Heart left ventricle (tissue), 16 donors: ENCODE measurements at regions of chr20 and their contacts with region 1.

Region 1: GRCh38 chr20:45293041-45294002 is 13.3 kb upstream of the RBPJL start:
- DNase-seq: peak; percentile 61 to 91 (median 81)
- ATAC-seq: peak; percentile 35 to 90 (median 86)
- H3K4me3 ChIP-seq: peak overlapping the region; percentile 19 to 65 (median 52)
- H3K27ac ChIP-seq: no peak overlapping the region
- H3K4me1 ChIP-seq: peaks cover 0 to 19% (median 8%) of the 10 kb centered on the region in 12 donors
- H3K27me3 ChIP-seq: peaks cover 0 to 63% (median 11%) of the 10 kb centered on the region in 9 donors
- CTCF ChIP-seq: peak; percentile 83 to 95 (median 91)
- POLR2A ChIP-seq: no peak

Region 2: DNA sequence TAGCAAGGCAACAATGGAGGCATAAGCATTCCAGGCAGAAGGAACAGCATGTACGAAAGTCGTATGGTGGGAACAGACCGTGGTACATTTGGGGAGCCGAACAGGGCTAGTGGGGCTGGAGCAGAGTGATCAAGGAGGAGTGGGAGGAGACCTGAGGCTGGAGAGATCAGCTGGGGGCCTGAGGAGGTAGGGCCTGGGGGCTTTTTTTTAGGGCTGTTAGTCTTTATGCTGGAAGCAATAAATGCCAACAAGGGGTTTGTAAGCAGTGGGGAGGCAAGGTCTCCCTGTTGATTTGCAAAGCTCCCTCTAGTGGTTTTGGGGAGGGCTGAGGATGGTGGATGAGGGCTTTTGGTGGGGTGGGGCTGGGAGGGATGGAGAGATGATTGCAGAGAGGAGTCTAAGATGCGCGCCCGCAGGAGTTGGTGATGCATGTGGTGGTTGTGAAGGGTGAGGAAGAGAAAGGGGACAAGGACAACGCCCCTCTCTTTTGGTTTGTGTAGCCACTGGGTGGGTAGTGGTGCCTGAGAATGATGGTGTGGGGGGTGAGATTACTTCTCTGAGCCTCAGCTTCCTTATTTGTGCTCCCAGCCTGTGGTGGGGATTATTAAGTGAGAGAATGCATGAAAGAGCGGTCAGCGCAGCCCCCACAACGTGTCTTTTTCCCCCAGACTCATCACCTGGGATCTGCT is 1452.8 kb before region 1 on chr20:
- intact Hi-C with region 1: no loop called
- DNase-seq: no peak
- ATAC-seq: no peak
- H3K4me3 ChIP-seq: no peak overlapping the region
- H3K27ac ChIP-seq: no peak overlapping the region
- H3K4me1 ChIP-seq: peaks cover 0 to 9% (median 0%) of the 10 kb centered on the region in 12 donors
- H3K27me3 ChIP-seq: peaks cover 0 to 9% (median 0%) of the 10 kb centered on the region in 9 donors
- CTCF ChIP-seq: peak in 9 of 12 donors; percentile 17 to 32 (median 19)
- POLR2A ChIP-seq: no peak

Region 3: GRCh38 chr20:44532259-44532980 is 760.9 kb before region 1 on chr20:
- intact Hi-C with region 1: no loop called
- DNase-seq: no peak
- ATAC-seq: peak in 2 of 4 donors; percentile 8 to 37
- H3K4me3 ChIP-seq: peak overlapping the region; percentile 45 to 99 (median 86)
- H3K27ac ChIP-seq: peak overlapping the region in 11 of 12 donors; percentile 17 to 87 (median 76)
- H3K4me1 ChIP-seq: peaks cover 0 to 32% (median 10%) of the 10 kb centered on the region in 12 donors
- H3K27me3 ChIP-seq: peaks cover 0 to 10% (median 0%) of the 10 kb centered on the region in 9 donors
- CTCF ChIP-seq: no peak
- POLR2A ChIP-seq: no peak

Region 4: GRCh38 chr20:45095753-45096371 is 197.5 kb before region 1 on chr20:
- intact Hi-C with region 1: loop called in 3 of 10 experiments (anchors 5 to 10 kb)
- DNase-seq: peak in 4 of 5 donors; percentile 34 to 50 (median 39)
- ATAC-seq: peak; percentile 18 to 67 (median 50)
- H3K4me3 ChIP-seq: no peak overlapping the region
- H3K27ac ChIP-seq: no peak overlapping the region
- H3K4me1 ChIP-seq: peaks cover 0 to 17% (median 4%) of the 10 kb centered on the region in 12 donors
- H3K27me3 ChIP-seq: peaks cover 20 to 51% (median 33%) of the 10 kb centered on the region in 9 donors
- CTCF ChIP-seq: peak; percentile 54 to 79 (median 70)
- POLR2A ChIP-seq: no peak